Stomach (tissue), 19 donors: ENCODE measurements at regions of chr10 and their contacts with region 1.

Region 1: DNA sequence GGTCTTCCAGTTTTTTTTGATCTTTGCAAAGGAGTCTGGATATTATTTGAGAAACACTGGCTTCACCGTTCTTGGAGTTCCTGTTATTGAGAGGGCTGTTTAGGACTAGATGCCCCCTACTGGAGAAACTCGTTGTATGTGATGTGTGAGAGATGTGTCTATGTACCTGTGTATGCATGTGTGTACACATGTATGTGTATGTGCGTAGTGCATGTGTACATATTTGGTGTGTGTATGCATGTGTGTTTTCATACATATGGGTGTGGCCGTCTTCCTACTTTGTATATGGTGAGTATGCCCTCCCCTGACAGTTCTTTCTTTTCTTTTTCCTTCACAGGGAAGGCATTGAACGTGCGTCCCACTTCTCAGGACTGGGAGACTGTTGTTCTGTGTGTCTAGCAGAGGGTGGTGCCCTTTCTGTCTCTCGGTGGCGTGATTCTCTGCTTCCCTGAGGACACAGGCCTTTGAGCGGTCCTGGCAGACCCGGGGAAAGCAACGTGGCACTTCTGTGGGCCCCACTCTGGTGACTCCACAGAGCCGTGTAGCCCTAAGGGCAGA is 3.0 kb upstream of the CALHM3 start:
- DNase-seq: peak in 1 of 2 donors; percentile 83
- H3K4me3 ChIP-seq: no peak overlapping the region
- H3K27ac ChIP-seq: no peak overlapping the region
- H3K4me1 ChIP-seq: peaks cover 0 to 14% (median 5%) of the 10 kb centered on the region in 4 donors
- H3K27me3 ChIP-seq: peaks cover 0 to 6% (median 0%) of the 10 kb centered on the region in 3 donors
- CTCF ChIP-seq: peak in 5 of 7 experiments; percentile 18 to 61 (median 43)
- EP300 ChIP-seq: no peak
- POLR2A ChIP-seq: no peak

Region 2: DNA sequence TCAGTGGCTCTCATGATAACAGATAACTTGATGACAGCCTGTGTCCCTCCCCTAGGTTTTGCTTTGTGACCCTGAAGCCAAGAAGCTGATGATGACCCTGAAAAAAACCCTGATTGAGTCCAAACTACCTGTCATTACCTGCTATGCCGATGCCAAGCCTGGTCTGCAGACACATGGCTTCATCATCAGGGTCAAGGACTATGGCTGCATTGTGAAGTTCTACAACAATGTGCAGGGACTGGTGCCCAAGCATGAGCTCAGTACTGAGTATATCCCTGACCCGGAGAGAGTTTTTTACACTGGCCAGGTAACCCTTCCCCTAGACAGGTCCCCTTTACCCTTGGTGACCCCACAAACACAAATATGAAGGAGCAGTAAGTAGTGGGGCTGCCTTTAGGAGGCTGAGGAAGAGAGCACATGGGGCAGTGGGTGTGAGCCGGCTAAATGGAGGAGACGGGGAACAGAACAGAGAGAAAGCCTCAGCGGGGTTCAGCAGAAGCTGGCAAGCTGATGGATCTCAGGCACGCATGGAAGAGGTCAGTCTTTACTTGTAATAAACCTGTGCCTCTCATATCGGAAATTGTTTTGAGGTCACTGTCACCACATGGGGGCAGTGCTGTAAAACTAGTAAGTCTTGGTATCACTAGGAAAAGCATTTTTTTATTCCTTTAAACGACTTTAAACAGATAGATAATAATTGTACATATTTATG is 65.5 kb before region 1 on chr10:
- intact Hi-C with region 1: loop called (anchors 5 kb)
- DNase-seq: peak; percentile 68 to 88
- H3K4me3 ChIP-seq: no peak overlapping the region
- H3K27ac ChIP-seq: no peak overlapping the region
- H3K4me1 ChIP-seq: no peaks in the 10 kb centered on the region
- H3K27me3 ChIP-seq: no peaks in the 10 kb centered on the region
- CTCF ChIP-seq: peak in 5 of 7 experiments; percentile 29 to 63 (median 39)
- EP300 ChIP-seq: no peak
- POLR2A ChIP-seq: no peak

Region 3: DNA sequence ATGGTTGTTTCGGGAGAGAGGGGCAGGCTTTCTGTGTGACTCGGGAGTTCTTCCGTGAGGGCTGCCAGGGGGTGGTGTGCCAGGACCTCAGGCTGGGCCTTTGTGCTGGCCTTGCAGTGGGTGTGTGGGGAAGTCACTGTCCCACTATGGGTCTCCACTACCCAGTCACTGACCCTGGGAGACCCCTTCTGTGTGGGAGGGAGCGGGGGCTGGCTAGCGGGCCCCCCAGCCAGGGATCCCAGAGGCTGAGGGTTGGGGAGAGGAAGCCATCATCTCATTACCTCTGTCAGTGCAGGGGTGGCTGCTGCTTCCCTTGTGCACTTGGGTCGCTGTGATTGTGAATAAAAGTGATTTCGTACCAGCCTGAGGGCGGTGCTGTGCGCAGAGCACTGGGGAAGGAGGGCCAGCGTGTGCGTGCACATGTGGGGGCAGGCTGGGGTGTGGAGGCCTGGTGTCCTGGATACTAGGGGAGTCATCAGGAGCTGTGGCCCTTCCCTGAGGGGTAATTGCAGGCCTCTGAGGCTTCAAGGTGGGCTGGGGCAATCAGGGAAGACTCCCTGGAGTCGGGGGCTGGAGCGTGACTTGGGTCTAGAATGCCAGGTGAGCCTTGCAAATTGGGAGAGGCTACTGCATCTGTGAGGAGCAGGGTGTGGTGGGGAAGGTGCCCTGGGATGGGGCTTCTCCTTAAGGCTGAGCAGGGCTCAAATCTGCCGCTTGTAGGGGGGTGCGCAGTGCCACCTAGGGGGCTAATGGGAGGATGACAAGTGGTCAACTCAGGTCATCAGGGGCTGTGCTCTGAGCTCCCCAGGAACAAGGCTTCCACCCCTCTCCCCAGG is 110.4 kb after region 1 on chr10:
- intact Hi-C with region 1: no loop called
- DNase-seq: peak; percentile 47 to 69
- H3K4me3 ChIP-seq: no peak overlapping the region
- H3K27ac ChIP-seq: no peak overlapping the region
- H3K4me1 ChIP-seq: no peaks in the 10 kb centered on the region
- H3K27me3 ChIP-seq: no peaks in the 10 kb centered on the region
- CTCF ChIP-seq: peak in 5 of 7 experiments; percentile 24 to 53 (median 40)
- EP300 ChIP-seq: no peak
- POLR2A ChIP-seq: no peak

Region 4: DNA sequence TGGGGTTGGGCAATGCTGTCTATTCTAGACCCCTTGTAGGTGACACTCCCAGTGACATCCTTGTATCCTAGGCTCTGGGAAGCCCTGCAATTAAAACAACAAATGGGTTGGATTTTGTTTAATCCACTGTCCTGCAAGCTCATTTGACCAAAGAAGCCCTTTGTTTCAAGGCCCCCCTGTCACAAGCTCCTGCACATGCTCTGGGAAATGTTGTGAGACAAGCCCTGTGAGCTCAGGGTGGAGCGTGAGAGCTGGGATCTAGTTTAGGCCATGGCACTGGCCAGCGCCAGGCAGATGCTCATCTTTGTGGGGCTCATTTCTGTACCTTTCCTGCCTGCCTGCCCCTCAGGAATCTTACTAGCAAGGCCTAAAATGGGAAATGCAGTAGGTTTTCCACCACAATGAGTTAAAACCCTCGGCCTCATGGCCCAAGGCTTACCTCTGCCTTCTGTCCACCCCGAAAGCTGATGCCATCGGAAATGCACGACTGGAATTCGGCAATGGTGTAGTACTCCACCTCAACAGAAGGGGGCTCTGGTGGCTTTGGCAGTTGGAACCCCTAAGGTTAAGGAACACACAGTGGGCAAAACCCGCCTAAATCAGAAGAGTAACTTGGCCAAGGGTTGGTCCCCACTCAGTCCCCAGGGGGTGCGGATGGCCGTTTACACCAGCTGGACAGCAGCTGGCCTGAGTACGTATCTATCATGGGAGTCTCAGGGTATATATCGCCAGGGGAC is 123.5 kb after region 1 on chr10:
- intact Hi-C with region 1: no loop called
- DNase-seq: peak; percentile 53 to 59
- H3K4me3 ChIP-seq: no peak overlapping the region
- H3K27ac ChIP-seq: peak overlapping the region in 1 of 5 donors; percentile 64
- H3K4me1 ChIP-seq: peaks cover 0 to 7% (median 4%) of the 10 kb centered on the region in 4 donors
- H3K27me3 ChIP-seq: no peaks in the 10 kb centered on the region
- CTCF ChIP-seq: peak in 6 of 7 experiments; percentile 42 to 78 (median 71)
- EP300 ChIP-seq: no peak
- POLR2A ChIP-seq: no peak